Activated CD4-positive, alpha-beta memory T cell treated with anti-CD3 and anti-CD28 coated beads for 36 hours (primary cell): ENCODE measurements at regions of chr2 and their contacts with region 1.

Region 1: DNA sequence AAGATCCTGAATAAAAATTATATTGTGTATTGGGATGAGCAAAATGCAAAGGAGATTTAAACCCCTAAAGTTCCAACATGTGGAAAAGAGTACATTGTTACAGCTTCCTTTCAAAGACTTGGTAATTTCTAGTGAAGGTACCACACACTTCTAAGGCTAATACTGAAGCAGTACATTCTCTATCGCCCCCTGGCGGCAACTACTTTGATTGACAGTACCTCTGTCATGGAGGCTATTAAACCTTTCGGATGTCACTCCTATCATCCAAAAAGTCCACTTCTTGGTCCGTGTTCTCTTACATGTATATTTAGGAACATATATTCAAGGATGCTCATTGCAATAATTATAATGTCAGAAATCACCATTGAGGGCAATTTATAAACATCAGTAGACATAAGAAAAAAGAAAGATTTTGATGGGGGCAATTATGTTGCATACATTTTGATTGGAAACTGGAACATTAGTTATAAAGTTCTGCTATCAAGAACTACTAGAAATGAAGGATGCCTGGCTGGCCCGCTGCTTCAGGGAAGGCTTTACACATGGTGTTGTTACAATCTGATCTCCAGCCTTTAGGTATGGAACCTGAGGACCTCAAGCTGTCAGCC is 601.6 kb downstream of the CPS1 start:
- DNase-seq: peak; percentile 75
- H3K4me3 Mint-ChIP-seq: no peak overlapping the region
- H3K27ac Mint-ChIP-seq: no peak overlapping the region
- H3K4me1 Mint-ChIP-seq: no peaks in the 10 kb centered on the region
- H3K27me3 Mint-ChIP-seq: no peaks in the 10 kb centered on the region

Region 2: GRCh38 chr2:210577263-210578071 is 580.5 kb before region 1 on chr2:
- CTCF ChIA-PET with region 1: no interaction called
- POLR2A ChIA-PET with region 1: no interaction called
- intact Hi-C with region 1: loop called (anchors 1 kb)
- DNase-seq: no peak
- H3K4me3 Mint-ChIP-seq: no peak overlapping the region
- H3K27ac Mint-ChIP-seq: no peak overlapping the region
- H3K4me1 Mint-ChIP-seq: no peaks in the 10 kb centered on the region
- H3K27me3 Mint-ChIP-seq: no peaks in the 10 kb centered on the region

Region 3: DNA sequence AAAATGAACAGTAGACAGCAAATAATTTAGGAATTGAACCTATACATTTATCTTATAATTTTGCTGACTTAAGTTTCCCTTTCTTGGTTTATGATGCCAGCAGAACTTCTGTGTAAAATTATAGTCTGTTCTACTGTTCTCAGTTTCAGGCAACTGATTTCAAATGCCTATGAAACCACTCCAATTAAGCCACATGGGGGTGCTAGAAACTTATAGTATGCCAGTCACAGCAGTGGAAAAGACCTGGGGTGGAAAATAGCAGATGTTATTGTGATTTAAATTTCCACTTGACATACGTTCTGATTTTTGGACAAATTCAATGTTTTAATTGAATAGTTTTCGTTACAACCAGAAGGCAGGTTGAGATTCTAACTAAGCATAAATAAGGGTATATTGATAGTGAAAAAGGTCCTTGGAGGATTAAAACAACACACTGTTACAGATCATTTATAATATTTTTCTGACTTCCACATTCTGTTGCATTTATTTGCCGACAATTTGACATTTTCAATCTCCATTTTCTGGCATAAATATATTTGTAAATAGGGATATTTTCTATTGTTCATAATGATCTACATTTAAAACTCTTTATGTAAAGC is 540.1 kb before region 1 on chr2:
- CTCF ChIA-PET with region 1: interaction called, 3 read pairs
- POLR2A ChIA-PET with region 1: no interaction called
- intact Hi-C with region 1: loop called (anchors 1 kb)
- DNase-seq: no peak
- H3K4me3 Mint-ChIP-seq: no peak overlapping the region
- H3K27ac Mint-ChIP-seq: no peak overlapping the region
- H3K4me1 Mint-ChIP-seq: no peaks in the 10 kb centered on the region
- H3K27me3 Mint-ChIP-seq: no peaks in the 10 kb centered on the region

Region 4: GRCh38 chr2:211085056-211085680 is 72.8 kb before region 1 on chr2:
- CTCF ChIA-PET with region 1: interaction called, 3 read pairs
- POLR2A ChIA-PET with region 1: no interaction called
- intact Hi-C with region 1: loop called (anchors 1 kb)
- DNase-seq: no peak
- H3K4me3 Mint-ChIP-seq: no peak overlapping the region
- H3K27ac Mint-ChIP-seq: no peak overlapping the region
- H3K4me1 Mint-ChIP-seq: no peaks in the 10 kb centered on the region
- H3K27me3 Mint-ChIP-seq: no peaks in the 10 kb centered on the region